Mammary epithelial cell (primary cell): ENCODE measurements at regions of chr1 and their contacts with region 1.

Region 1: GRCh38 chr1:156434989-156435544 is 65.5 kb downstream of the MEF2D start:
- DNase-seq: no peak
- H3K4me3 ChIP-seq: no peak overlapping the region
- H3K27ac ChIP-seq: no peak overlapping the region
- H3K4me1 ChIP-seq: no peaks in the 10 kb centered on the region
- H3K27me3 ChIP-seq: peaks cover 16% of the 10 kb centered on the region
- CTCF ChIP-seq: no peak

Region 2: GRCh38 chr1:156368889-156369684 is 66.0 kb before region 1 on chr1 and contains the start of gene RHBG:
- CTCF ChIA-PET with region 1: no interaction called
- dilution Hi-C with region 1: loop called (anchors 5 kb)
- in situ Hi-C with region 1: no loop called
- intact Hi-C with region 1: no loop called
- DNase-seq: peak; percentile 35
- H3K4me3 ChIP-seq: peak within 1 kb of the TSS; percentile 41 to 58 (median 56)
- H3K27ac ChIP-seq: no peak within 1 kb of the TSS
- H3K4me1 ChIP-seq: peaks cover 5% of the 10 kb centered on the region
- H3K27me3 ChIP-seq: no peaks in the 10 kb centered on the region
- CTCF ChIP-seq: no peak
- total RNA-seq, gene RHBG: not detected

Region 3: DNA sequence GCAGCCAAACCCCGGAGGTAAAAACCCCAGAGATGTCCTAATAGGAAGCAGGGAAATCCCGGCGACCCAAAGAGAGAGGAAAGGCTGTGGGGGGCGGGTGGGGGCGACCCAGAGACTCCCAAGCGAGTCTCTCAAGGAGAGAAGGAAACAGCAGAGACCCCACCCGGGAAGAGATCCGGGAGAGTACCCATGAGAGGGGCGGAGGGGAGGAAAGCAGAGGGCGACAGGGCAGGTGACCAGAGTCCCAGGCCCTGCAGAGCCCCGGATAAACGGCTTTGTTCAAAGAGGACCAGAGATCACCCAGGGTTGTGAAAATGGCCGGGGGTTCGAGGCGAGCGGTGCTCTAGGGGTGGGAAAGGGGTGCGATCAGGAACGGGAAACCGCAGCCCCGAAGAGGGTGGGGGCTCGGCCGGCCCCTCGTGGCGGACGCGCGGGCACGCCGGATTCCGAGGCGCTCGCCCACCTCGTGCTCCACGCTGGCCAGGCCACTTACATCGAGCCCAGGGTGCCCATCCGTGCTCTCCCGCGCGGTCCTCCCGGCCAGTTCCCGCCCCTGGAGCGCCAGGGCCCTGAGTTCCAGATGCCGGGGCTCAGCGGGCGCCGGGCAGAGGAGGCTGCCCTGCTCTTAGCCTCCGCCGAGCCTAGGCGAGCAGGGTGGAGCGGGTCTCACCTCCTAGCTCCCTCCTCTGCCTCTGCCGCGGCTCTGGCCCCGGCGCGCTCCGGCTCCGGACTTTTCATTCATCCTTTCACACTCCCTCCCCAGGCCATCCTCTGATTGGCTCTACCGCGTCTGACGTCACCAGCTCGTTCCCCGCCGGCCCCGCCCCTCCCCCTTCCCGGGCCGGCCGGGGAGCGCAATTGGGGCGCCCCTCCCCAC is 13.8 kb before region 1 on chr1:
- CTCF ChIA-PET with region 1: no interaction called
- dilution Hi-C with region 1: no loop called
- in situ Hi-C with region 1: no loop called
- intact Hi-C with region 1: loop called (anchors 2 kb)
- DNase-seq: peak; percentile 70
- H3K4me3 ChIP-seq: peak overlapping the region in 2 of 3 experiments; percentile 39
- H3K27ac ChIP-seq: no peak overlapping the region
- H3K4me1 ChIP-seq: peaks cover 11% of the 10 kb centered on the region
- H3K27me3 ChIP-seq: peaks cover 21% of the 10 kb centered on the region
- CTCF ChIP-seq: no peak

Region 4: GRCh38 chr1:156456622-156457465 is 21.8 kb after region 1 on chr1:
- CTCF ChIA-PET with region 1: no interaction called
- dilution Hi-C with region 1: no loop called
- in situ Hi-C with region 1: no loop called
- intact Hi-C with region 1: no loop called
- DNase-seq: peak; percentile 97
- H3K4me3 ChIP-seq: peak overlapping the region; percentile 22 to 50 (median 43)
- H3K27ac ChIP-seq: peak overlapping the region; percentile 54
- H3K4me1 ChIP-seq: peaks cover 12% of the 10 kb centered on the region
- H3K27me3 ChIP-seq: no peaks in the 10 kb centered on the region
- CTCF ChIP-seq: no peak

Region 5: GRCh38 chr1:156524481-156524869 is 89.4 kb after region 1 on chr1:
- CTCF ChIA-PET with region 1: no interaction called
- dilution Hi-C with region 1: loop called (anchors 5 kb)
- in situ Hi-C with region 1: no loop called
- intact Hi-C with region 1: no loop called
- DNase-seq: no peak
- H3K4me3 ChIP-seq: no peak overlapping the region
- H3K27ac ChIP-seq: no peak overlapping the region
- H3K4me1 ChIP-seq: no peaks in the 10 kb centered on the region
- H3K27me3 ChIP-seq: no peaks in the 10 kb centered on the region
- CTCF ChIP-seq: no peak